Endothelial cell of umbilical vein (primary cell): ENCODE measurements at regions of chr10 and their contacts with region 1.

Region 1: DNA sequence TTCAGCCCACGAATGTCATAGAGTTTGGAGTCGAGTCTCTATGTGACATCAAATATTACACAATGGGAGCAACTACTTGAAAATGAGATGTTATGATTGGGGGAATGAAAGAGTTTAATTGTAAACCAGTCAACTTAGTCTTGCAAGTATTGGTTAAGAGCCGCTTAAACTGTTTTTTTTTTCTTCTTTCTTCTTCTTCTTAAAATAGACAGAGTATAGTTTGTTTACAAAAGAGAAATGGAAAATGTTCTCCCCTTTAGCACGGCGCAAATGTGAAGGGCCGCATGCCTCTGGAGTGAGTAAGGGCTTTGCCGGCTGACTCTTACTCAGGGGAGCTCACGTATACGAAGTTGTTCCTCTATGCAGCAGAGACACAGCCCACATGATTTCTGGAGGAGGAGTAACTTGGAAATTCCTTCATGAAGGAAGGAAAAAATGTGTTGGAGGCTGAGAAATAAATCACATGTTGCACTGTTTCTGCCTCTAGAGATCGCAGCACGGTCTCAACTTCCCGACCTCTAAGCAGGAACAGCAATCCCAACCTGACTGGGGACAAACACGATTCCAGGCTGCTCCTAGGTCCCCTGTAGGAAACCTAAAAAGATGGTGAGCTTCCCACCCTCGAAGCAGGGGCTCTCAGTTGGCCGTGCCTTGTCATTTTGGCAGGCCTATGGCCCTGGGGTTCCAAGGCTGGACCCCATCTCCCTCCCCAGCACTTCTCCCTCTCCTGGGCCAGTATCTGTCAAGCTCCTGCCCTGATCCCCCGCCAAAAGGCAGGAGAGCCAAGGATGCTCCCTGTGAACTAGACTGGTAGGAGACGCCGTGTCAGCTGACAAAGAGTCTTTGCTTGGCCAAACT is 44.8 kb downstream of the MYOF start:
- DNase-seq: peak; percentile 99
- H3K4me3 ChIP-seq: no peak overlapping the region
- H3K27ac ChIP-seq: peak overlapping the region; percentile 100
- H3K4me1 ChIP-seq: peaks cover 52% of the 10 kb centered on the region
- H3K27me3 ChIP-seq: no peaks in the 10 kb centered on the region
- CTCF ChIP-seq: no peak
- POLR2A ChIP-seq: peak; percentile 50

Region 2: DNA sequence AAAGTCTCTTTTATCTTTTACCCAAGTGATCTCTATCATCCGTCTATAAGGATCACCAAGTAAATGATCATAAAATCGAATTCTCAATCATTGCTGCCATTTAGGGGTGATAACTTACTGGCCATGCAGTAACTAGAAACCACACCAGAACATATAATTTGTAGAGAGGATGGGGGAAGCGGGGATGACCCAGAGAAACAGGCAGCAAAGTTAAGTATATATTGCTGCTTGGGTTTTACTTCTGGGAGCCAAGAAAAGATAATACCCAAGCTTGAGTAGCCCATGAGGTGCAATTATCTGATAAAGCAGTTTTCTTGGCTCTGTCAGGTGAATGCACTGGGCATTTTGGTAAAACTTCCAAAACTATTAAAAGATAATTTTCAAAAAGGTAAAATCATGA is 570.1 kb before region 1 on chr10:
- CTCF ChIA-PET with region 1: no interaction called
- POLR2A ChIA-PET with region 1: no interaction called
- dilution Hi-C with region 1: no loop called
- intact Hi-C with region 1: no loop called
- DNase-seq: no peak
- H3K4me3 ChIP-seq: no peak overlapping the region
- H3K27ac ChIP-seq: no peak overlapping the region
- H3K4me1 ChIP-seq: peaks cover 22% of the 10 kb centered on the region
- H3K27me3 ChIP-seq: no peaks in the 10 kb centered on the region
- CTCF ChIP-seq: no peak
- POLR2A ChIP-seq: no peak

Region 3: DNA sequence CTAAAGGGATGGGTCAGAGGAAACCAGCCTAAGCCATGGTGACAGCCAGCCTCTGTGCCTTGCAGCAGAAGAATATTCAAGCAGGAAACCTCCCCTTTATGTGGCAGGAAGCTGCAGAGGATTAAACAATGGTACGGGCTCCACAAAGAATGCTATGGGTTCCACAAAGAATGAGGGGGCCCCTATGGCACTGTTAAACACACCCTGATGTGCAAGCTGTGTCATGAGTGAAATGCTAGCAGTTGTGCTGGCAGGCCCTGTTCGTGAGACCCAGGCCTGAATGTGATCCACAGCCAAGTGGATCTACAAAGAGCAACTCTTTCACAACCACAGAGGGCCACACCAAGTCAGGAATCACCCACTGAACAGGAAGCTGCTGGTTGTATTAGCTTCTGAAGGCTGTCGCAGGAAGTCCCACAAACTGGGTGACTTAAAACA is 24.0 kb before region 1 on chr10:
- CTCF ChIA-PET with region 1: interaction called, 5 read pairs
- POLR2A ChIA-PET with region 1: no interaction called
- dilution Hi-C with region 1: no loop called
- intact Hi-C with region 1: loop called (anchors 1 kb)
- DNase-seq: peak; percentile 65
- H3K4me3 ChIP-seq: no peak overlapping the region
- H3K27ac ChIP-seq: peak overlapping the region; percentile 49
- H3K4me1 ChIP-seq: peaks cover 28% of the 10 kb centered on the region
- H3K27me3 ChIP-seq: no peaks in the 10 kb centered on the region
- CTCF ChIP-seq: no peak
- POLR2A ChIP-seq: no peak

Region 4: GRCh38 chr10:93420091-93420490 is 17.2 kb before region 1 on chr10:
- CTCF ChIA-PET with region 1: interaction called, 5 read pairs
- POLR2A ChIA-PET with region 1: interaction called, 5 read pairs
- dilution Hi-C with region 1: no loop called
- intact Hi-C with region 1: loop called (anchors 1 kb)
- DNase-seq: no peak
- H3K4me3 ChIP-seq: no peak overlapping the region
- H3K27ac ChIP-seq: no peak overlapping the region
- H3K4me1 ChIP-seq: peaks cover 30% of the 10 kb centered on the region
- H3K27me3 ChIP-seq: no peaks in the 10 kb centered on the region
- CTCF ChIP-seq: no peak
- POLR2A ChIP-seq: no peak

Region 5: GRCh38 chr10:93463678-93464476 is 26.6 kb after region 1 on chr10:
- CTCF ChIA-PET with region 1: interaction called, 12 read pairs
- POLR2A ChIA-PET with region 1: interaction called, 17 read pairs
- dilution Hi-C with region 1: no loop called
- intact Hi-C with region 1: loop called (anchors 1 kb)
- DNase-seq: peak; percentile 41
- H3K4me3 ChIP-seq: no peak overlapping the region
- H3K27ac ChIP-seq: peak overlapping the region; percentile 89
- H3K4me1 ChIP-seq: peaks cover 86% of the 10 kb centered on the region
- H3K27me3 ChIP-seq: no peaks in the 10 kb centered on the region
- CTCF ChIP-seq: no peak
- POLR2A ChIP-seq: peak; percentile 32